ENCODE measurements at regions of chr19 and their contacts with region 1.

Region 1: DNA sequence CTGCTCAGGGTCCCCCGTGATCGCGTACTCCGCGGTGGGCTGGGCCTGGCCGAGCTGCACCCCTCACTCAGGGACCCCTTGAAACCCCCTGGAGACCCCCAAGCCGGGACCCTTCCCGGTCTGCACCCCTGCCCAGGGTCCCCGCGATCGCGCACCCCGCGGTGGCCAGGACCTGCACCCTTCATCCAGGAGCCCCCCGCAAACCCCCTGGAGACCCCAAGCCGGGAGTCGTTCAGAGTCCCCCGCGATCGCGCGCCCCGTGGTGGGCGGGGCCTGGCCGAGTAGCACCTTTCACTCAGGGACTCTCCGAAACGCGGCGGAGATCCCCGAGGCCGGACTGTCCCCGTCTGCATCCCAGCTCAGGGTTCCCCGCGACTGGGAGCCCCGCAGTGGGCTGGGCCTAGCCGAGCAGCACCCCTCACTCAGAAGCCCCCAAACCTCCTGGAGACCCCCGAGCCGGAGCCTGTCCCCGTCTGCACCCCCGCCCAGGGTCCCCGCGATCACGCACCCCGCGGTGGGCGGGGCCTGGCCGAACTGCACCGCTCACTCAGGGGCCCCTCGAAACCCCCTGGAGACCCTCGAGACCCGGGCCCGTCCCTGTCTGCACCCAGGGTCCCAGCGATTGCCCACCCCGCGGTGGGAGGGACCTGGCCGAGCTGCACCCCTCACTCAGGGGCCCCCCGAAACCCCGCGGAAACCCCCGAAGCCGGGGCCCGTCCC is 748 bp downstream of the LMNB2 start:
- DNase-seq: no peak
- H3K4me3 ChIP-seq: peak overlapping the region; percentile 44 to 98 (median 96)
- H3K27ac ChIP-seq: peak overlapping the region; percentile 20 to 67 (median 64)
- H3K4me1 ChIP-seq: peaks cover 0 to 20% (median 14%) of the 10 kb centered on the region in 4 donors
- H3K27me3 ChIP-seq: no peaks in the 10 kb centered on the region
- CTCF ChIP-seq: no peak
- EP300 ChIP-seq: no peak
- POLR2A ChIP-seq: no peak

Region 2: GRCh38 chr19:2427429-2428320 is 28.3 kb before region 1 on chr19 and contains the start of gene TIMM13:
- intact Hi-C with region 1: loop called (anchors 1 kb)
- DNase-seq: peak; percentile 99
- H3K4me3 ChIP-seq: peak within 1 kb of the TSS; percentile 70 to 98 (median 85)
- H3K27ac ChIP-seq: peak within 1 kb of the TSS; percentile 94 to 98 (median 98)
- H3K4me1 ChIP-seq: peaks cover 0 to 48% (median 39%) of the 10 kb centered on the region in 4 donors
- H3K27me3 ChIP-seq: no peaks in the 10 kb centered on the region
- CTCF ChIP-seq: no peak
- EP300 ChIP-seq: peak in 2 of 4 donors; percentile 15 to 18
- POLR2A ChIP-seq: peak; percentile 16 to 60
- total RNA-seq, gene TIMM13: 23.6 to 29.3 (median 26.3) TPM

Region 3: DNA sequence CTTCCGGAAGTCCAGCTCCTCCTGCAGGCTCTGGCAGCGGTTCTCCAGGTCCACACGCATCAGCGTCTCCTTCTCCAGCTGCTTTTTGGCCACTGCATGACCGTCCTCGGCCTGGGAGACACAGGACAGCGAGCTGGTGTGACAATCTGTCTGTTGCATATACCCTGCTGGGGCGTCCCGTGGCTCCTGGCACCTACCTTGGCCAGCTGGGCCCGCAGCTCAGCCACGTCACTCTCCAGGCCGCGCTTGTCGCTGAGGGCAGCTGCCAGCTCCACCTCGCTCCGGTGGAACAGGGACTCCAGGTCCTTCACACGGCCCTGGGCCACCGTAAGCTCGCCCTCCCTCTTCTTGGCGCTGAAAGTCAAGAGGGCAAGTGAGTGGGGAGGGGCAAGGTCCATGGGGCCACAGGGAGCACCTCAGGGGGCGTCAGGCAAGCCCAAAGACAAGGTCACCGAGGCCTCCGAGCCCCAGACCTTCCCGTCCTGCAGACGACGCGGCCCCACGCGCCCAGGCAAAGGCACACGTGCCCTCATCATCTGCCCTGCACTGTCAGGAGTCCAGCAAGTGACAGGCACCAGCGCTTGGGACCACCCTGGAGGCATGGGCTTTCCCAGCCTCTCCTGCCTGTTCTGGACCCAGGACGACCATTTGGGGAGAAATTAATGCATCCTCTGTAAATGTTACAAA is 17.7 kb before region 1 on chr19:
- intact Hi-C with region 1: no loop called
- DNase-seq: no peak
- H3K4me3 ChIP-seq: no peak overlapping the region
- H3K27ac ChIP-seq: no peak overlapping the region
- H3K4me1 ChIP-seq: no peaks in the 10 kb centered on the region
- H3K27me3 ChIP-seq: no peaks in the 10 kb centered on the region
- CTCF ChIP-seq: no peak
- EP300 ChIP-seq: no peak
- POLR2A ChIP-seq: no peak

Region 4: GRCh38 chr19:2578391-2578826 is 122.4 kb after region 1 on chr19:
- intact Hi-C with region 1: no loop called
- DNase-seq: peak; percentile 73
- H3K4me3 ChIP-seq: peak overlapping the region in 3 of 4 donors; percentile 50 to 55 (median 54)
- H3K27ac ChIP-seq: peak overlapping the region; percentile 85 to 95 (median 86)
- H3K4me1 ChIP-seq: peaks cover 0 to 56% (median 23%) of the 10 kb centered on the region in 4 donors
- H3K27me3 ChIP-seq: no peaks in the 10 kb centered on the region
- CTCF ChIP-seq: no peak
- EP300 ChIP-seq: no peak
- POLR2A ChIP-seq: no peak

Region 5: DNA sequence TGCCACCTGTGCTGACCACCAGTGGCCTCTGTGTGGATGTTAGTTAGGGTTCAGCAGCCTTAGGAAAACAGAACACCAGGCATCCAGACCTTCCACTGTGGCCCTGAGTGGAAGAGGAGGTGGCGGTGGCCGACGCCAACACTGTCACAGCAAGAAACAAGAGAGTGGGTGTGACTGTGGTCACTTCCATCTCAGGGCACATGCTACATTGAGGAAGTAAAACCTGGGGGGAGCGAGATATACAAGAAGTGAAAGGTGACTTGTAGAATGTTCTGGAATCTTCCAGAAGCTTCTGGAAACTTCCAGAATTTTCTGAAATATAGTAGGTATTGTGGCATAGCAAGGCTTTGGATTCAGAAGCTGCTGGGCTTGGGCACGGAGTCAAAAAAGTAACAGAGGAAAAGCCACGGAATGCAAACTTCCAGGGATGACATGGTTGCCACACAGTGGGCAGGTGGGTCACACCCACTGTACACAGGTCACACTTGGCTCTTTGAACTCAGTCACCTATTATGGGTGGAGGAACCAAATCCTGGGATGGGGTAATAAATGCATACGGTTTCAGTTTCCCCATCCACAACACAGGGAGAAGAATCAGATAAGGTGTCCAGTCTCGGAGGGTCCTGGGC is 222.1 kb after region 1 on chr19:
- intact Hi-C with region 1: no loop called
- DNase-seq: no peak
- H3K4me3 ChIP-seq: no peak overlapping the region
- H3K27ac ChIP-seq: no peak overlapping the region
- H3K4me1 ChIP-seq: peaks cover 0 to 15% (median 9%) of the 10 kb centered on the region in 4 donors
- H3K27me3 ChIP-seq: no peaks in the 10 kb centered on the region
- CTCF ChIP-seq: no peak
- EP300 ChIP-seq: no peak
- POLR2A ChIP-seq: no peak

Region 6: DNA sequence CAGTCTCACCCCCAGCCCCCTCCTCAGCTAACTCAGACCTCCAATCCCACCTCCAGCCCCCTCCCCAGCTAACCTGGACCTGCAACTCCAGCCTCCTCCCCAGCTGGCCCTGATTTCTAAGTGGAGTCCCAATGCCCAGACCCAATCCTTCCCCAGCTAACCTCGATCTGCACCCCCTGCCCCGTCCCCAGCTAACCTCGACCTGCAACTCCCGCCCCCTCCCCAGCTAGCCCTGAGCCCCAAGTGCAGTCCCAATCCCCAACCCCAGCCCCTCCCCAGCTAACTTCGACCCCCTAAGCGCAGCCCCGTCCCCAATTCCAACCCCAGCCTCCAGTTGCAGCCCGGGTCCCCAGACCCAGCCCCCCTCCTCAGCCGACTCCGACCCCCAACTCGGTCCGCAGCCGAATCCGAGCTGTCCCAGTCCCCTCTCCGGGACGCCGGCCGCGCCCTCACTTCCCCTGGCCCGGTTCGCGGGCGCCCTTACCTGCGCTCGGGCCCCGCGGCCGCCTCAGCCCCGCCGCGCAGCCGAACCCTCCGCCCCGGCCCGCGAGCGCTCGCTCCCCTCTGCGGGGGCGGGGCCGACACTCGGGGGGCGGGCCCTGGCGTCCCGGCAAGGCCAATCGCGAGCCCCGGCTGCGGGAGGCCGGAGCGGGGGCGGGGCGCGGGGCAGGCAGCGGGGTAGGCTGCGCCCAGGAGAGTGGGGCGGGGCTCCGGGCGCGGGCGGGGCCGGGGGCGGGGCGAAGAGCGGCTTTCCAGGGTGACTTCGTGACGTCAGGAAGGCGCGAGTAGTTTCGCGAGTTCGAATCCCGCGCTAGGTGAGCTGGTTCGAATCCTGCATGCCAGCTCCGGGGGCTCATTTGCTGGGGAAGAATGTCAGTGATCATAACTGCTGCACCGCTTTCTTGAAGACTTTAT is 246.4 kb after region 1 on chr19 and contains the start of gene GNG7:
- intact Hi-C with region 1: loop called (anchors 10 kb)
- DNase-seq: peak; percentile 96
- H3K4me3 ChIP-seq: peak within 1 kb of the TSS; percentile 49 to 72 (median 67)
- H3K27ac ChIP-seq: peak within 1 kb of the TSS; percentile 52 to 71 (median 58)
- H3K4me1 ChIP-seq: peaks cover 0 to 19% (median 12%) of the 10 kb centered on the region in 4 donors
- H3K27me3 ChIP-seq: no peaks in the 10 kb centered on the region
- CTCF ChIP-seq: no peak
- EP300 ChIP-seq: no peak
- POLR2A ChIP-seq: no peak
- total RNA-seq, gene GNG7: 1.8 to 8.0 (median 3.0) TPM